PC-9 (cell line): ENCODE measurements at regions of chr3 and their contacts with region 1.

Region 1: GRCh38 chr3:99023590-99024192 is 122.2 kb upstream of the DCBLD2 start:
- DNase-seq: no peak
- H3K4me3 ChIP-seq: no peak overlapping the region
- H3K27ac ChIP-seq: no peak overlapping the region
- H3K4me1 ChIP-seq: no peaks in the 10 kb centered on the region
- H3K27me3 ChIP-seq: no peaks in the 10 kb centered on the region
- CTCF ChIP-seq: peak; percentile 96

Region 2: DNA sequence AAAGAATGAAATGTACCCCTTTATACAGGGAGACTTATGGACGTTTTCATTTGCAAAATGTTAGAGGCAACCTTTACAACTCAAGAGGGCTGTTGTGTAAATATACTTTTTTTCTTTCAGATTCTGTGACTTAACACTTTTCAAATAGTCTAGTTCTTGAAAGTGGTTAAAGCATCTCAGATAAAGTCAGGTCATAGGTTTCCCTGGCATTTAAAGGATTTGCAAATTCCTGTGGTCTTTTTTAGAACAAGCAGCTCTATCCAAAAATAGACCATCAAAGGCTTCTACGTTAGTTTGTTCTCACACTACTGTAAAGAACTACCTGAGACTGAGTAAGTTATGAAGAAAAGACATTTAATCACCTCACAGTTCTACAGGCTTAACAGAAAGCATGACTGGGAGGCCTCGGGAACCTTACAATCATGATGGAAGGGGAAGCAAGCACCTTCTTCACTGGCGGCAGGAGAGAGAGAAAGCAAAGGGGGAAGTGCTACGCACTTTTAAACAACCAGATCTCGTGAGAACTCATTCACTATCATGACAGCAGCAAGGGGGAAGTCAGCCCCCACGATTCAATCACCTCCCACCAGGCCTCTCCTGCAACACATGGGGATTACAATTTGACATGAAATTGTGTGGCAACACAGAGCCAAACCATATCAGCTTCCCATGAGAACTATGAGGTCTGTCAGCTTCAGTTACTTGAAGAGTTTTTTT is 965.3 kb before region 1 on chr3:
- CTCF ChIA-PET with region 1: interaction called, 10 read pairs
- POLR2A ChIA-PET with region 1: no interaction called
- intact Hi-C with region 1: no loop called
- DNase-seq: peak in 1 of 2 experiments; percentile 77
- H3K4me3 ChIP-seq: no peak overlapping the region
- H3K27ac ChIP-seq: peak overlapping the region; percentile 69
- H3K4me1 ChIP-seq: peaks cover 28% of the 10 kb centered on the region
- H3K27me3 ChIP-seq: no peaks in the 10 kb centered on the region
- CTCF ChIP-seq: no peak

Region 3: GRCh38 chr3:98483130-98483482 is 540.6 kb before region 1 on chr3:
- CTCF ChIA-PET with region 1: interaction called, 12 read pairs
- POLR2A ChIA-PET with region 1: no interaction called
- intact Hi-C with region 1: no loop called
- DNase-seq: peak; percentile 87 to 88
- H3K4me3 ChIP-seq: peak overlapping the region; percentile 35
- H3K27ac ChIP-seq: peak overlapping the region; percentile 94
- H3K4me1 ChIP-seq: peaks cover 30% of the 10 kb centered on the region
- H3K27me3 ChIP-seq: no peaks in the 10 kb centered on the region
- CTCF ChIP-seq: no peak

Region 4: DNA sequence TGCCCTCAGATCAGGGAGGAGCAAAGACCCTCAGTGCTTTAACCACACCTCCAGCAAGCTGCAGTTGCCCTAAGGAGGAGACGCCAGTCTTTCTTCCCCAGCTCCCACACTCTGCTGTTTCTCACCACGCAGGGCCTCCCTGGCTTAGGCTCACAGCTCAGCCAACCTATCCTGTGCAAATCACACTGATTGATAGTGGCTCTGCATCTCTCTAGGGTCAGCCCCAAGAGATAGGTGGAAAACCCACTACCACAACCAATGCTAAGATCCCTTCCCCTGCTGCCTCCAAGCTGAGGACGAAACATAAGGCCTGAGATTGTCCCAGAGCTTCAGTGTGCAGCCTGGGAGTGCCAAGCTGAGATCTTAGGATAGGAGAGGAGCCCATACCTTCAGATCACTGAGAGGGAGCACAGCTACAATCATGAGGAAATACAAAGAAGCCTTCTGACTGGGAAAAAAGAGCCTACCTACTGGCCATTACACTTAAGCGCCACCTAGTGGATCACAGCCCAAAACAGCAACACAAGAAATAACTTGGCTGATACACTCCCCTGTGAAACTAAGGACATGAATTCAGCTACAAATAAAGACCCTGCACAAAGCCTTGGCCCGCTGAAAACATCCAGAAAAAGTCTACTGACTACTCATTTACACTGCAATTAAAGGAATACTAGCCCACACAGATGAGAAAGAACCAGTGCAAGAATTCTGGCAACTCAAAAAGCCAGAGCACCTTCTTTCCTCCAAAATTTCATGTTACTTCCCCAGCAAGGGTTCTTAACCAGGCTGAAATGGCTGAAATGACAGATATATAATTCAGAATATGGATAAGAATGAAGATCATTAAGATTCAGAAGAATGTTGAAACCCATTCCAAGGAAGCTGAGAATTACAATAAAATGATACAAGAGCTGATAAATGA is 149.3 kb after region 1 on chr3:
- CTCF ChIA-PET with region 1: interaction called, 10 read pairs
- POLR2A ChIA-PET with region 1: no interaction called
- intact Hi-C with region 1: loop called (anchors 1 kb)
- DNase-seq: peak; percentile 58 to 59
- H3K4me3 ChIP-seq: no peak overlapping the region
- H3K27ac ChIP-seq: no peak overlapping the region
- H3K4me1 ChIP-seq: no peaks in the 10 kb centered on the region
- H3K27me3 ChIP-seq: no peaks in the 10 kb centered on the region
- CTCF ChIP-seq: peak; percentile 97

Region 5: DNA sequence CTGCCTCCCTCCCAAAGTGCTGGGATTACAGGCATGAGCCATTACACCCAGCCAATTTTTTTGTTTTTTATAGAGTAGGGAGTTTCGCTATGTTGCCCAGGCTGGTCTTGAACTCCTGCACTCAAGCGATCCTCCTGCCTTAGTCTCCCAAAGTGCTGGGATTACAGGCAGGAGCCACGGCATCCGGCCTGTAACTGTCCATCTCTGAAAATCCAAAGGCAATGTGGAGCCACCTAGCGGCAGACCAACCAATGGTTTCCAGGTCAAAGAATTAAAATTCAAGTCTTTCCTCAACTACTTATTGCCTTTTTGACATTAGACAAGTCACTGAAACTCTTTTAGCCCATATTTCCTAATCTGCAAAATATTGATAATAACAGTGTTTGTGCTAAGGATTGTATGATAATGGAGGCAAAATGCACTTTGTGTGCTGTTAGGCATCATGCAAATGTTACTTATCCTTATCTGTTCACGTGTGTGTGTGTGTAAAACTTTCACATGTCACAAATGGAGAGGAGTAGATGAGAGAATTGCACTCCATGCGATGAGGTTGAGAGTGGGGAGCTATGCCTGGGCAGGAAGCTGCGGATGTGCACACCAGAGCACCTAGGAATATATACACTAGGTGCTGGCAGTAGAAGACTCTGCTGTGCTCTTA is 663.4 kb after region 1 on chr3:
- CTCF ChIA-PET with region 1: interaction called, 7 read pairs
- POLR2A ChIA-PET with region 1: no interaction called
- intact Hi-C with region 1: loop called (anchors 2 kb)
- DNase-seq: peak in 1 of 2 experiments; percentile 69
- H3K4me3 ChIP-seq: no peak overlapping the region
- H3K27ac ChIP-seq: no peak overlapping the region
- H3K4me1 ChIP-seq: no peaks in the 10 kb centered on the region
- H3K27me3 ChIP-seq: no peaks in the 10 kb centered on the region
- CTCF ChIP-seq: peak; percentile 98

Region 6: GRCh38 chr3:99747915-99748314 is 724.2 kb after region 1 on chr3:
- CTCF ChIA-PET with region 1: interaction called, 4 read pairs
- POLR2A ChIA-PET with region 1: no interaction called
- intact Hi-C with region 1: loop called (anchors 1 kb)
- DNase-seq: peak; percentile 33 to 39
- H3K4me3 ChIP-seq: no peak overlapping the region
- H3K27ac ChIP-seq: no peak overlapping the region
- H3K4me1 ChIP-seq: no peaks in the 10 kb centered on the region
- H3K27me3 ChIP-seq: no peaks in the 10 kb centered on the region
- CTCF ChIP-seq: peak; percentile 45; the same call in 1 of the 2 replicates

Region 7: GRCh38 chr3:99789011-99789721 is 765.5 kb after region 1 on chr3:
- CTCF ChIA-PET with region 1: interaction called, 3 read pairs
- POLR2A ChIA-PET with region 1: no interaction called
- intact Hi-C with region 1: loop called (anchors 1 kb)
- DNase-seq: peak; percentile 34 to 46
- H3K4me3 ChIP-seq: no peak overlapping the region
- H3K27ac ChIP-seq: no peak overlapping the region
- H3K4me1 ChIP-seq: no peaks in the 10 kb centered on the region
- H3K27me3 ChIP-seq: no peaks in the 10 kb centered on the region
- CTCF ChIP-seq: peak; percentile 89